ENCODE measurements at regions of chr4 and their contacts with region 1.

Region 1: DNA sequence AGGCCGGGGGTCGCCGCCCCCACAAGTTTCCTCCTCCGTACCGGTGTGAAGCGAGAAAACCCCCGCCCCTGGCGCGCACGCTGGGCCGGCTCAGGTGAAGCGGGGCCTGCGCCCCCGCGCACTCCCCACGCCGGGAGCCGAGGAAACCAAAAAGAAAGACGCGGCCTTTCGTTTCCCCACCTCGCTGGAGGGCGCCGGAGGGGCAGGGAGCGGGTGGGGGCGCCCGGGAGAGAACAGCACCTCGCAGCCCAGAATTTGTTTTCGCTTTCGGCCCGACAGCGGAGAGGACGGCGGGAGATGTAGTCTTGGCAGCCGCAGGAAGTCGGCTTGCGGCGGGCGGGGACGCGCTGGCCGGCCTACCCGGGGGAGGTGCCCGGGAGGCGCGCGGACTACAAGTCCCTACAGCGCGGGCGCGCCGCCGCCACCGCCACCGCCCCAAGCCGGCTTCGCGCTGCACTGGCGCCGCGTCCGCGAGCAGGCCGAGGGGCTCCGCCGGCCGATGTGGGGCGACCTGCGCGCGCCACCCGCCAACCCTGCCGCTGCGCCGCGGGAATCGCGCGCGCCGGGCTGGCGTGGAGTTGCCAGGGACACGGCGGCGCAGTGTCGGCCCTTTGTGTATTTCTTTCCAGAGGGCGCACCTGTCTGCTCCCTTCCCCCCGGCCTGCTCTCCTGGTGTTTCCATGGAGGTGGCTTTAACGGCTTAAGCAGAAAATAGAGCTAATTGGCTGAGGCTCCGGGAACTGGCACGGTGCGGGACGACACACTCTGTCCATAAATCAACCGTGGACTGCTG is at the start of gene OTUD4:
- DNase-seq: peak; percentile 89 to 97 (median 95)
- ATAC-seq: peak; percentile 93
- H3K4me3 ChIP-seq: peak within 1 kb of the TSS; percentile 81
- H3K4me3 Mint-ChIP-seq: peak within 1 kb of the TSS; percentile 80 to 98 (median 97)
- H3K27ac ChIP-seq: peak within 1 kb of the TSS; percentile 96
- H3K27ac Mint-ChIP-seq: peak within 1 kb of the TSS; percentile 94 to 98 (median 97)
- H3K4me1 ChIP-seq: peaks cover 21 to 31% of the 10 kb centered on the region in 2 donors
- H3K4me1 Mint-ChIP-seq: peaks cover 21 to 35% (median 30%) of the 10 kb centered on the region in 7 donors
- H3K27me3 ChIP-seq: no peaks in the 10 kb centered on the region
- H3K27me3 Mint-ChIP-seq: peaks cover 0 to 3% (median 0%) of the 10 kb centered on the region in 5 donors
- total RNA-seq, gene OTUD4: 49.2 to 65.4 (median 59.9) TPM

Region 2: GRCh38 chr4:143184217-143185116 is 1996.0 kb before region 1 on chr4 and contains the start of gene USP38:
- CTCF ChIA-PET with region 1: no interaction called
- POLR2A ChIA-PET with region 1: no interaction called
- intact Hi-C with region 1: loop called (anchors 1 to 5 kb)
- DNase-seq: peak; percentile 74 to 90 (median 85)
- ATAC-seq: peak; percentile 91
- H3K4me3 ChIP-seq: peak within 1 kb of the TSS; percentile 78
- H3K4me3 Mint-ChIP-seq: peak within 1 kb of the TSS; percentile 78 to 99 (median 94)
- H3K27ac ChIP-seq: peak within 1 kb of the TSS; percentile 96
- H3K27ac Mint-ChIP-seq: peak within 1 kb of the TSS; percentile 93 to 99 (median 97)
- H3K4me1 ChIP-seq: peaks cover 27% of the 10 kb centered on the region in 2 donors
- H3K4me1 Mint-ChIP-seq: peaks cover 41 to 82% (median 70%) of the 10 kb centered on the region in 7 donors
- H3K27me3 ChIP-seq: no peaks in the 10 kb centered on the region
- H3K27me3 Mint-ChIP-seq: no peaks in the 10 kb centered on the region
- total RNA-seq, gene USP38: 22.4 to 28.8 (median 24.3) TPM

Region 3: GRCh38 chr4:145019346-145019745 is 161.1 kb before region 1 on chr4:
- CTCF ChIA-PET with region 1: no interaction called
- POLR2A ChIA-PET with region 1: no interaction called
- intact Hi-C with region 1: loop called in 1 of 2 experiments (anchors 1 kb)
- DNase-seq: peak in 2 of 9 donors; percentile 1 to 5
- ATAC-seq: no peak
- H3K4me3 ChIP-seq: no peak overlapping the region
- H3K4me3 Mint-ChIP-seq: peak overlapping the region in 9 of 10 donors; percentile 0 to 78 (median 52)
- H3K27ac ChIP-seq: peak overlapping the region; percentile 29
- H3K27ac Mint-ChIP-seq: peak overlapping the region in 8 of 9 donors; percentile 50 to 93 (median 74)
- H3K4me1 ChIP-seq: peaks cover 6 to 11% of the 10 kb centered on the region in 2 donors
- H3K4me1 Mint-ChIP-seq: peaks cover 16 to 52% (median 40%) of the 10 kb centered on the region in 7 donors
- H3K27me3 ChIP-seq: no peaks in the 10 kb centered on the region
- H3K27me3 Mint-ChIP-seq: no peaks in the 10 kb centered on the region

Region 4: GRCh38 chr4:145148980-145149379 is 31.5 kb before region 1 on chr4:
- CTCF ChIA-PET with region 1: interaction called, 3 read pairs
- POLR2A ChIA-PET with region 1: no interaction called
- intact Hi-C with region 1: loop called in 1 of 2 experiments (anchors 2 kb)
- DNase-seq: no peak
- ATAC-seq: no peak
- H3K4me3 ChIP-seq: no peak overlapping the region
- H3K4me3 Mint-ChIP-seq: no peak overlapping the region
- H3K27ac ChIP-seq: no peak overlapping the region
- H3K27ac Mint-ChIP-seq: peak overlapping the region in 1 of 9 donors; percentile 38
- H3K4me1 ChIP-seq: no peaks in the 10 kb centered on the region
- H3K4me1 Mint-ChIP-seq: peaks cover 0 to 20% (median 4%) of the 10 kb centered on the region in 7 donors
- H3K27me3 ChIP-seq: no peaks in the 10 kb centered on the region
- H3K27me3 Mint-ChIP-seq: no peaks in the 10 kb centered on the region

Region 5: GRCh38 chr4:145199051-145199716 is 18.7 kb after region 1 on chr4:
- CTCF ChIA-PET with region 1: no interaction called
- POLR2A ChIA-PET with region 1: interaction called, 11 read pairs
- intact Hi-C with region 1: no loop called
- DNase-seq: no peak
- ATAC-seq: no peak
- H3K4me3 ChIP-seq: no peak overlapping the region
- H3K4me3 Mint-ChIP-seq: no peak overlapping the region
- H3K27ac ChIP-seq: no peak overlapping the region
- H3K27ac Mint-ChIP-seq: no peak overlapping the region
- H3K4me1 ChIP-seq: no peaks in the 10 kb centered on the region
- H3K4me1 Mint-ChIP-seq: no peaks in the 10 kb centered on the region
- H3K27me3 ChIP-seq: no peaks in the 10 kb centered on the region
- H3K27me3 Mint-ChIP-seq: peaks cover 10 to 24% (median 14%) of the 10 kb centered on the region in 5 donors

Region 6: GRCh38 chr4:145213245-145213644 is 32.8 kb after region 1 on chr4:
- CTCF ChIA-PET with region 1: no interaction called
- POLR2A ChIA-PET with region 1: no interaction called
- intact Hi-C with region 1: no loop called
- DNase-seq: no peak
- ATAC-seq: no peak
- H3K4me3 ChIP-seq: no peak overlapping the region
- H3K4me3 Mint-ChIP-seq: no peak overlapping the region
- H3K27ac ChIP-seq: no peak overlapping the region
- H3K27ac Mint-ChIP-seq: no peak overlapping the region
- H3K4me1 ChIP-seq: no peaks in the 10 kb centered on the region
- H3K4me1 Mint-ChIP-seq: peaks cover 0 to 4% (median 0%) of the 10 kb centered on the region in 7 donors
- H3K27me3 ChIP-seq: no peaks in the 10 kb centered on the region
- H3K27me3 Mint-ChIP-seq: peaks cover 0 to 10% (median 3%) of the 10 kb centered on the region in 5 donors

Region 7: DNA sequence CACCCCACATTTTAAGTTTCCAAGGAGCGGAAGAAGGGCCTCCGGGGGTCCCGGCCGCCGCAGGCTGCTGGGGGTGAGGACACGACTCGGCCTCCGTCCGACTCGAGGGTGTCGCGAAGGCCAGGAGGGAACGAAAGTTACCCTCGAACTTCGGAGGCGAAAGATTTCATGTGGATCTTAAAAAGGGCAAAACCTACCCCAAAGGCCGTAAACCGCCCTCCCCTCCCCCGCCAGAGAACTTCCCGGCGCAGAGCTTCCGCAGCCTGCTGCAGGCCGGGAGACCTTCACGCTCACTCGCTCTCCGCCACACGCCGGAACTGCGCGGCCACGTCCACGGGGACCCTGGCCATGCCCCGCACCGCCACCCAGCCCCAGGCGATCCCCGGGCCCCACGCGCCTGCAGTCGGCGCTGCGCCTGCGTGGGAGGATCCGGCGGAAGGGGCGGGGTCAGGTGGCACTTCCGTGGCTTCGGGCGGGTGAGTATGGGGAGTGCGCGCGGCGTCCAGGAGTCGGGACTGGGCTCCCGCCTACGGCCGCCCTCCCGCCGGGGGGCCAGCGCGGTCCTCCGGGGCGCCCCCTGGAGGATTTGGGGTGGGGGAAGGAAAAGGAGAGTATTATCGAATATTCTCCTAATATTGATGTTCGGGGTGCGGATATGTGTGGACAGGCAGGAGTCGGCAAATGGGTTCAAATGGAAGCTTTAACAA is 438.6 kb after region 1 on chr4 and contains the start of gene MMAA:
- CTCF ChIA-PET with region 1: interaction called, 5 read pairs
- POLR2A ChIA-PET with region 1: interaction called, 10 read pairs
- intact Hi-C with region 1: loop called (anchors 1 kb)
- DNase-seq: peak; percentile 90 to 99 (median 92)
- ATAC-seq: peak; percentile 97
- H3K4me3 ChIP-seq: peak within 1 kb of the TSS; percentile 93
- H3K4me3 Mint-ChIP-seq: peak within 1 kb of the TSS; percentile 90 to 99 (median 98)
- H3K27ac ChIP-seq: peak within 1 kb of the TSS; percentile 94
- H3K27ac Mint-ChIP-seq: peak within 1 kb of the TSS; percentile 95 to 100 (median 99)
- H3K4me1 ChIP-seq: peaks cover 18 to 29% of the 10 kb centered on the region in 2 donors
- H3K4me1 Mint-ChIP-seq: peaks cover 16 to 55% (median 47%) of the 10 kb centered on the region in 7 donors
- H3K27me3 ChIP-seq: no peaks in the 10 kb centered on the region
- H3K27me3 Mint-ChIP-seq: peaks cover 1 to 5% (median 5%) of the 10 kb centered on the region in 5 donors
- total RNA-seq, gene MMAA: 7.2 to 17.3 (median 12.8) TPM

Region 8: GRCh38 chr4:145719752-145720624 is 539.5 kb after region 1 on chr4:
- CTCF ChIA-PET with region 1: no interaction called
- POLR2A ChIA-PET with region 1: no interaction called
- intact Hi-C with region 1: no loop called
- DNase-seq: peak in 1 of 9 donors; percentile 40
- ATAC-seq: peak; percentile 38
- H3K4me3 ChIP-seq: no peak overlapping the region
- H3K4me3 Mint-ChIP-seq: peak overlapping the region in 1 of 10 donors; percentile 68
- H3K27ac ChIP-seq: no peak overlapping the region
- H3K27ac Mint-ChIP-seq: peak overlapping the region in 1 of 9 donors; percentile 7
- H3K4me1 ChIP-seq: no peaks in the 10 kb centered on the region
- H3K4me1 Mint-ChIP-seq: peaks cover 0 to 15% (median 6%) of the 10 kb centered on the region in 7 donors
- H3K27me3 ChIP-seq: no peaks in the 10 kb centered on the region
- H3K27me3 Mint-ChIP-seq: peaks cover 8 to 43% (median 19%) of the 10 kb centered on the region in 5 donors

Region 9: GRCh38 chr4:146175541-146176453 is 995.3 kb after region 1 on chr4 and contains the start of gene LSM6:
- CTCF ChIA-PET with region 1: no interaction called
- POLR2A ChIA-PET with region 1: interaction called, 3 read pairs
- intact Hi-C with region 1: loop called (anchors 1 to 5 kb)
- DNase-seq: peak; percentile 63 to 86 (median 84)
- ATAC-seq: peak; percentile 94
- H3K4me3 ChIP-seq: peak within 1 kb of the TSS; percentile 87
- H3K4me3 Mint-ChIP-seq: peak within 1 kb of the TSS; percentile 88 to 95 (median 92)
- H3K27ac ChIP-seq: peak within 1 kb of the TSS; percentile 94
- H3K27ac Mint-ChIP-seq: peak within 1 kb of the TSS; percentile 82 to 99 (median 97)
- H3K4me1 ChIP-seq: peaks cover 25 to 31% of the 10 kb centered on the region in 2 donors
- H3K4me1 Mint-ChIP-seq: peaks cover 29 to 66% (median 57%) of the 10 kb centered on the region in 7 donors
- H3K27me3 ChIP-seq: no peaks in the 10 kb centered on the region
- H3K27me3 Mint-ChIP-seq: no peaks in the 10 kb centered on the region
- total RNA-seq, gene LSM6: 24.7 to 49.7 (median 46.2) TPM